Activated CD4-positive, alpha-beta memory T cell treated with anti-CD3 and anti-CD28 coated beads for 36 hours (primary cell): ENCODE measurements at regions of chr1 and their contacts with region 1.

Region 1: GRCh38 chr1:160837558-160838205 is 25.0 kb downstream of the CD244 start:
- DNase-seq: peak; percentile 89
- H3K4me3 Mint-ChIP-seq: peak overlapping the region; percentile 9
- H3K27ac Mint-ChIP-seq: peak overlapping the region; percentile 89
- H3K4me1 Mint-ChIP-seq: peaks cover 43% of the 10 kb centered on the region
- H3K27me3 Mint-ChIP-seq: no peaks in the 10 kb centered on the region

Region 2: GRCh38 chr1:160681067-160681890 is 156.4 kb before region 1 on chr1:
- CTCF ChIA-PET with region 1: interaction called, 20 read pairs
- POLR2A ChIA-PET with region 1: no interaction called
- intact Hi-C with region 1: no loop called
- DNase-seq: peak; percentile 94
- H3K4me3 Mint-ChIP-seq: peak overlapping the region; percentile 17
- H3K27ac Mint-ChIP-seq: peak overlapping the region; percentile 96
- H3K4me1 Mint-ChIP-seq: peaks cover 87% of the 10 kb centered on the region
- H3K27me3 Mint-ChIP-seq: no peaks in the 10 kb centered on the region

Region 3: DNA sequence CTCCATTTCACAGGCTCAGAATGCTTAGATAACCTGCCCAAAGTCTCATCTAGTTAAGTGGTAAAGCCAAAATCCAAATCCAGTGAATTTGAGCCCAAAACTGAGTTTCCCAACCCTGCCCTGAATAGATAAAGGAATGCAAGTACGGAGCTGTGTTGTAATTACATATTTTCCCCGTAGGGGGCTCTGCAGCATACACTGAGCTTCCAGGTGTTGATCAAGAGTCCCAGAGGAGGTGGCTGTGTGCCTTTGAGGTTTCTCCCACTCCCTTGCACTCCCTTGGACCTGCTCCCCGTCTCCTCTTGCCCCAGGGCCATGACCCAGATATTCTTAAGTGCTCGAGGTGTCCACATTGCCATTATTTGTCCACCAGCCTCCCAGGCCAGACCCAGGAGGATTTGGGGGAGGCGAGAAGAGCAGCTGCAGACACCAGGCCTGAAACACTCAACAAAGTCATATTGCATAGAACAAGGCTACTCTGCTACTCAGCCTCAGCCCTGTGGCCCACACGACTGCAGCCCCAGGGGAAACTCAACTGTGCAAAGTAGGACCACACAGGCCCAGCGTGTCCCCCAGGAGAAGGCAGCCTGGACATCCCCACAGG is 60.1 kb before region 1 on chr1:
- CTCF ChIA-PET with region 1: interaction called, 56 read pairs
- POLR2A ChIA-PET with region 1: interaction called, 3 read pairs
- intact Hi-C with region 1: no loop called
- DNase-seq: peak; percentile 58
- H3K4me3 Mint-ChIP-seq: no peak overlapping the region
- H3K27ac Mint-ChIP-seq: no peak overlapping the region
- H3K4me1 Mint-ChIP-seq: peaks cover 38% of the 10 kb centered on the region
- H3K27me3 Mint-ChIP-seq: no peaks in the 10 kb centered on the region

Region 4: DNA sequence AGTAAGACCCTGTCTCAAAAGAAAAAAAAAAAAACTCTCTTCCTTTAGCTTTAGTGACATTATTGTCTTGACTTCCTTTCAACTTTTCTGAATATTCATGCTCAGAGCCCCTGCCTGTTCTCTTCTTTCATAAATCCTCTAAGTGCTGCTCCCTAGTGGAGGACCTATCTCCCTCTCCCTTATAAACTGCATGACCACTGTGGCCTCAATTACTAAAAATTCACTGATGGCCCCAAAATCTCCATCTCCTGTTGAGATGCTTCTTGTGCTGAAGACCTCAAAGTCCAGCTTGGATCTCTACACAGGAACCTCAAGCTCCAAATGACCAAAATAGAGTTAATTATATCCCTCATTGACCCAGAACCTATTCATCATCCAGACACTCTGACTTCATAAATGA is 39.5 kb after region 1 on chr1:
- CTCF ChIA-PET with region 1: interaction called, 29 read pairs
- POLR2A ChIA-PET with region 1: no interaction called
- intact Hi-C with region 1: loop called (anchors 1 kb)
- DNase-seq: no peak
- H3K4me3 Mint-ChIP-seq: no peak overlapping the region
- H3K27ac Mint-ChIP-seq: no peak overlapping the region
- H3K4me1 Mint-ChIP-seq: peaks cover 15% of the 10 kb centered on the region
- H3K27me3 Mint-ChIP-seq: no peaks in the 10 kb centered on the region

Region 5: DNA sequence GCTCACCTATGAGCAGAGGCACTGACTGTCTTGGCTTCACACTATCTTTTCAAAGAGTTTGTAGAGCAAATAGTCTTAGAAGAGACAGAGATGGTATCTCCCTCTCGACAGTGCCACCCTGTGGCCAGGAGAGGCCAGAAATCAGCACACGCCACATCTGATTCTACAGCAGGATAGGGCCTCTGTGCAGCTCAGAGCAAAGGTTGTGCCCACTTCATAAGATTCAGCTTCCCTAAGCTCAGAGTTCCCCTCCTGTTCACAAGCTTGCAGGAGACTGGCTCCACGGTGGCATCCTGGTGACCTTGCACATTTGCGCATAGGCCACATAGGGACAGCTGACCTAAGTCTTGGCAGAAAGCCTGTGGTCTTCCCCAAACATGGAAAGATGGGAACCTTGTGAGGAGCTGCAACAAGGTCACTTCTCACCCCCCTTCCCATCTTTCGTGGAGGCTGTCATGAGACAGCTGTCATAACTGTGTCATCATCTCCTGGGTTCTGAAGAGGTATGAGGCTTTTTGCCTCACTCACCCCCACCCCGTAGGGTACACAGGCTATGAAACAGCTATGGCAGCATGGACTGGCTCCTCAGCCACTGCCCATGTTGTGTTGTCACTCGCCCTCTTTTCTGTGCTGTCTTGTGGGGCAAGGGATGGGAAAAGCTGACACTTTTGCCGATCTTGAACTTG is 113.9 kb after region 1 on chr1:
- CTCF ChIA-PET with region 1: interaction called, 296 read pairs
- POLR2A ChIA-PET with region 1: interaction called, 4 read pairs
- intact Hi-C with region 1: loop called (anchors 1 kb)
- DNase-seq: peak; percentile 81
- H3K4me3 Mint-ChIP-seq: no peak overlapping the region
- H3K27ac Mint-ChIP-seq: no peak overlapping the region
- H3K4me1 Mint-ChIP-seq: peaks cover 2% of the 10 kb centered on the region
- H3K27me3 Mint-ChIP-seq: no peaks in the 10 kb centered on the region

Region 6: GRCh38 chr1:161082991-161083742 is 245.5 kb after region 1 on chr1:
- CTCF ChIA-PET with region 1: no interaction called
- POLR2A ChIA-PET with region 1: no interaction called
- intact Hi-C with region 1: no loop called
- DNase-seq: no peak
- H3K4me3 Mint-ChIP-seq: no peak overlapping the region
- H3K27ac Mint-ChIP-seq: no peak overlapping the region
- H3K4me1 Mint-ChIP-seq: no peaks in the 10 kb centered on the region
- H3K27me3 Mint-ChIP-seq: no peaks in the 10 kb centered on the region

Region 7: GRCh38 chr1:161098210-161099068 is 260.8 kb after region 1 on chr1 and contains the start of gene KLHDC9:
- CTCF ChIA-PET with region 1: interaction called, 19 read pairs
- POLR2A ChIA-PET with region 1: no interaction called
- intact Hi-C with region 1: loop called (anchors 5 kb)
- DNase-seq: peak; percentile 87
- H3K4me3 Mint-ChIP-seq: peak within 1 kb of the TSS; percentile 73
- H3K27ac Mint-ChIP-seq: peak within 1 kb of the TSS; percentile 74
- H3K4me1 Mint-ChIP-seq: peaks cover 37% of the 10 kb centered on the region
- H3K27me3 Mint-ChIP-seq: no peaks in the 10 kb centered on the region
- total RNA-seq, gene KLHDC9: 1.2 to 1.6 TPM